Posterior vena cava (tissue), 2 donors: ENCODE measurements at regions of chr15 and their contacts with region 1.

Region 1: DNA sequence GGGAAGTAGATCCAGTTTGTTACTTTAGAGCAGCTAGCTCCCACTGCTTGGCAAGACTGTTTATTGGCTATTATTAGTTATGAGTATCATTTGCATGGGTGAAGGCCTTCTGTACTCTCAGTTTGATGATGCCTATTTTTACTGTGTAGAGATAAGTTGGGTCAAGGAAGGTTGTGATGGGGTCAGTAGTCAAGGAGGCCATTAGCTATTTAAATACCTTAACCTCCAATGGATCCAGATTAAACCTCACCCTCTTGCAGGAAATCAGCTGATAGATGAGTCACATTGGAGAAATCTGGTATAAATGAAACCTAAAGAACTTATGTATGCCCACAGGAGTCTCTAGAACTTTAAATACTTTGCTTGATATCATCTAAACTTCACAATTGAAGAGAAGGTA is 45.0 kb downstream of the THBS1 start:
- DNase-seq: no peak

Region 2: DNA sequence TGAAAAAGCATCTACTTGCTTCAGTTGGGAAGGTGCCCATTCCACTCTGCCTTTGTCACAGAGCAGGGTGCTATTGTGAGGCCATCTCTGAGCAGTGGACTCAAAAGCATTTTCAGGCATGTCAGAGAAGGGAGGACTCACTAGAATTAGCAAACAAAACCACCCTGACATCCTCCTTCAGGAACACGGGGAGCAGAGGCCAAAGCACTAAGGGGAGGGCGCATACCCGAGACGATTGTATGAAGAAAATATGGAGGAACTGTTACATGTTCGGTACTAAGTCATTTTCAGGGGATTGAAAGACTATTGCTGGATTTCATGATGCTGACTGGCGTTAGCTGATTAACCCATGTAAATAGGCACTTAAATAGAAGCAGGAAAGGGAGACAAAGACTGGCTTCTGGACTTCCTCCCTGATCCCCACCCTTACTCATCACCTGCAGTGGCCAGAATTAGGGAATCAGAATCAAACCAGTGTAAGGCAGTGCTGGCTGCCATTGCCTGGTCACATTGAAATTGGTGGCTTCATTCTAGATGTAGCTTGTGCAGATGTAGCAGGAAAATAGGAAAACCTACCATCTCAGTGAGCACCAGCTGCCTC is 30.1 kb before region 1 on chr15:
- intact Hi-C with region 1: loop called in 1 of 2 experiments (anchors 1 kb)
- DNase-seq: no peak

Region 3: DNA sequence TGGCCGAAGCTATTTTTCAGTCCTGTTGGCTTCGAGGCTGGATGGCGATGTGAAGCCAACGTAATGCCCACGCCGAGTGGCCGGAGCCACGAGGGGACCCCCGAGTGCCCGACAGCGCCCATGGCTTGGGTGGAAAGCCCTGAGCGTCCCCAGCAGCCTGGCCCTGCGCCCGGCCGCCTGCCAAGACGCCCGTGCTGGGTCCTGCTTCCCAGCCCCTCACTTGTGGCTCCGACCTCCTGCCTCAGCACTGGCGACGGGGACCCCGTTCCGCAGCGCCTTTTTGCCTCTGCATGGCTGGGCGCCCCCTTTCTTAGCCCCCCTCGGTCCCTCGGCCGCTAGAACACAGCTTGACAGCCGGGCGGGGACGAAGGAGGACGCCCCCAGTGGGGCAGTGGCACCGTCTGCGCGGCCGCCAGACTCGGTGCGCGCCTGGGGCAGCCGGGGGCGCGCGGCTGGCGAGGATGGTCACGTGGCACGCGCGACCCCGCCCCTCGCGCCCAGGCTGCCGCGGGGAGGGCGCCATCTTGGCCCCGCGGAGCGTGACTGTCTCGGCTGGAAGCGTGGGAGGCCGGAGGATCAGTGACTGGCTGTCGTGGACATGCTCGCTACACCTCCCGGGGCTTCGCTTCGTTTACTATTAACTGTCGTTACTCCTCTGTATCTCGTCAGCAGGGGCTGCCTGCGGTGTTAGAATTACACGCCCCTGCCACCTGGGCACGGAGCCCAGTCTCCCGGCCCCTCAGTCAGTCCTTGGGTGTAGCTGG is 294.8 kb after region 1 on chr15:
- intact Hi-C with region 1: no loop called
- DNase-seq: peak; percentile 94

Region 4: GRCh38 chr15:39979606-39980005 is 353.8 kb after region 1 on chr15:
- intact Hi-C with region 1: no loop called
- DNase-seq: no peak